Activated CD4-positive, alpha-beta T cell treated with anti-CD3 and anti-CD28 coated beads, Interleukin-2, amount 10 ng/mL, durations not matched to agents 7 days and 5 days (primary cell): ENCODE measurements at regions of chr17 and their contacts with region 1.

Region 1: GRCh38 chr17:82217530-82218204 is 5.0 kb upstream of the CCDC57 start:
- DNase-seq: no peak
- H3K4me3 Mint-ChIP-seq: no peak overlapping the region
- H3K27ac Mint-ChIP-seq: no peak overlapping the region
- H3K4me1 Mint-ChIP-seq: peaks cover 24% of the 10 kb centered on the region
- H3K27me3 Mint-ChIP-seq: peaks cover 3% of the 10 kb centered on the region

Region 2: DNA sequence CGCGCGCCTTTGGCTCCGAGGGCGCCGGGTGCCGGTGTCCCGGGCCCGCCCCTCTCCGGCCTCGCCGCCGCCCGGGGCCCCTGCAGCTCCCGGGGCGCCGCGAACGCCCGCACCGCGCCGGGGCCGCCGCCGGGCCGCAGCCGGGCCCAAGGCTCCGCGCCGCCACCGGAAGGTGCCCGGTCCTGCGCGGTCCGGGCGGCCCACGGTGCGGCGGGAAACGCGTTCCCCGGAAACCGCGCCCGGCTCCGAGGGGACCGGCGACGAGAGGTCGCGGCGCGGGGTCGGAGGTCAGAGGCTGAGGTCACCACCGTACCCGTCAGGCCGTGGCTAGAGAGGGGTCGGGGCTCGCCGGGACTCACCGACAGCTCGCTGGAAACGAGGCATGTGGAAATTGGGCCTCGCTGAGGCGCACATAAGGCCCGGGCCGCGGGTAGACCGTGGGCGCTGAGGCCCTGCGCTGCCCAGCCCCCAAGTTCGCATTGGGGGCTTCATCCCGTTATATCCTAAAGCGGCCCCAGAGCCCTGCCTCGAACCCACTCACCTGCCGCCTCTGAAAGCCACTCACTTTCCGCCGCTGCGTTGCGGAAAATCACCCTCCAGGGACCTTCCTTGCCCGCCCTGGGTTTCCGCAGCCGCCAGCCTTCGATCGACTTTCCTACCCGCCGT is 151.9 kb before region 1 on chr17 and contains the start of gene DUS1L:
- CTCF ChIA-PET with region 1: no interaction called
- POLR2A ChIA-PET with region 1: interaction called, 10 read pairs
- DNase-seq: peak; percentile 67
- H3K4me3 Mint-ChIP-seq: peak within 1 kb of the TSS; percentile 85
- H3K27ac Mint-ChIP-seq: peak within 1 kb of the TSS; percentile 93
- H3K4me1 Mint-ChIP-seq: peaks cover 11% of the 10 kb centered on the region
- H3K27me3 Mint-ChIP-seq: no peaks in the 10 kb centered on the region
- total RNA-seq, gene DUS1L: 113 to 127 TPM

Region 3: GRCh38 chr17:82236142-82236981 is 18.7 kb after region 1 on chr17:
- CTCF ChIA-PET with region 1: interaction called, 14 read pairs
- POLR2A ChIA-PET with region 1: no interaction called
- DNase-seq: peak; percentile 74
- H3K4me3 Mint-ChIP-seq: no peak overlapping the region
- H3K27ac Mint-ChIP-seq: peak overlapping the region; percentile 50
- H3K4me1 Mint-ChIP-seq: peaks cover 53% of the 10 kb centered on the region
- H3K27me3 Mint-ChIP-seq: no peaks in the 10 kb centered on the region

Region 4: DNA sequence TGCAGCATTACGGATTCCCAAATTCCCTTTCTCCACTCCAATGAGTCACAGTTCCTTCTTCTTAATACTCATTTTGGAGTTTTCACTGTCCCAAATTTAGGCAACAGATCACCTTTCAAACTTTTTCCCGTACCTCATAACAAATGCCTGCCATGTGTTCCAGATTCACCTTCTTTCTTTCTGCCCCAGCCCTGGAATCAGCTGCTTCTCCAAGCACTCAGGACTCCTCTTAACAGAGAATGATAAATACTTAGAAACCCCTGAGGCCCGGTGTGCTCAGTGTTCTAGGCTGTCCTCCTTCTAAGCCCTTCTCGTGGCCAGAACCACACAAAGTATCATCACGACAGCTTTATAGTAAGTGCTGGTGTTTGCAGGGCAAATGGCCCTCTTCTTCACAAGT is 40.9 kb after region 1 on chr17:
- CTCF ChIA-PET with region 1: no interaction called
- POLR2A ChIA-PET with region 1: no interaction called
- DNase-seq: no peak
- H3K4me3 Mint-ChIP-seq: no peak overlapping the region
- H3K27ac Mint-ChIP-seq: no peak overlapping the region
- H3K4me1 Mint-ChIP-seq: peaks cover 12% of the 10 kb centered on the region
- H3K27me3 Mint-ChIP-seq: no peaks in the 10 kb centered on the region